ENCODE measurements at regions of chr5 and their contacts with region 1.

Region 1: DNA sequence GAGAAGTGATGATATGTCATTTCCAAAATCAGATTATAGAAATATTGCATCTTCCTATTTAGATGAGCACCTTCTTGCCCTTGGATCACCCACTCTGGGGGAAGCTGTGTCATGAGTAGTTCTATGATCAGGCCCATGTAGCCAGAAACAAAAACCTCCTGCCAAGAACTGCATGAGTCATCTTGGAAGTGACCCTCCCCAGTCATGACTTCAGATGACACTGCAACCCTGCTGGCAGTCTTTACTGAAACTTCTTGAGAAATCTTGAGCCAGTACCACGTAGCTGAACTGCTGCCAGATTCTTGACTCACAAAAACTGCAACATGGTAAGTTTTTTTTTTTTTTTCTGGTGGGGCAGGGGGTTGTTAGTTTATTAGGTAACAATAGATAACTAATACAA is 439.6 kb upstream of the PTGER4 start:
- DNase-seq: peak; percentile 77
- H3K4me3 Mint-ChIP-seq: no peak overlapping the region
- H3K27ac Mint-ChIP-seq: no peak overlapping the region
- H3K4me1 Mint-ChIP-seq: peaks cover 15% of the 10 kb centered on the region
- H3K27me3 Mint-ChIP-seq: no peaks in the 10 kb centered on the region

Region 2: GRCh38 chr5:40021007-40021406 is 219.1 kb before region 1 on chr5:
- CTCF ChIA-PET with region 1: no interaction called
- intact Hi-C with region 1: loop called (anchors 10 kb)
- DNase-seq: no peak
- H3K4me3 Mint-ChIP-seq: no peak overlapping the region
- H3K27ac Mint-ChIP-seq: no peak overlapping the region
- H3K4me1 Mint-ChIP-seq: no peaks in the 10 kb centered on the region
- H3K27me3 Mint-ChIP-seq: peaks cover 10% of the 10 kb centered on the region

Region 3: DNA sequence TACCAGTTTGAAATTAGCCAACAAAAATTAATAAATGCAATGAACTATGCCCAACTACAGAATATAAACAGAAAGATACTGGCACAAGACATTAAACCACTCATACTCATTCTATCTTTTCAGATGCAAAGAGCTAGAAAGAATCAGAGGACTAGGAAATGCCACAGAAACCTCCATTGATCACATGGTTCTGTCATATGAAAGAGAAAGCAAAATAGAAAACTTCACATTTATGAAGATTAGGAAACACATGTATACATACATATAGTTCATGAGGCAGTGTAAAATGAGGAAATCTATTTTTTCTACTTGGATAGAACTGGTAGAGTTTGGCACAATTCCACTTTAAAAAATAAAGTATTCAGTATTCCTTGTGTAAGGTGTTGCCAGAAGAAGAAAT is 164.5 kb after region 1 on chr5:
- CTCF ChIA-PET with region 1: no interaction called
- intact Hi-C with region 1: no loop called
- DNase-seq: no peak
- H3K4me3 Mint-ChIP-seq: peak overlapping the region; percentile 33
- H3K27ac Mint-ChIP-seq: peak overlapping the region; percentile 99
- H3K4me1 Mint-ChIP-seq: peaks cover 89% of the 10 kb centered on the region
- H3K27me3 Mint-ChIP-seq: no peaks in the 10 kb centered on the region

Region 4: DNA sequence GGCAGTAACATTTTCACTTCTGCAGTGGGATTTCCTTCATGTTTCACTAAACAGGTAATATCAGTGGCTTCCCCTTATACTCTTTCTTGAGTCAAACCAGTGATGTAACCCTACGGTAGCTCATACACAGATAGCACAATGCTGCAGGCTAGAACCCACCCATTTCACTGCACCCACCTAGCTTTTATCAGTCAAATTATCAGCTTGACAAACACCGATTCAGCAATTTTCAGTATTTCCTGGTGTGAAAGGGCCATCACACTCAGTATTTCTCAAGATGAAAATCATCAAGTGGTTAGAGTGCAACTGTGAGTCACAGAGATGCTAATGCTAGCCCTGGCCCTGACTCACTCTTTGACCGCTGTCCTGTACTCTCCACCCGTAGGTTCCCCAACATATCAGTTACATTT is 197.3 kb after region 1 on chr5:
- CTCF ChIA-PET with region 1: no interaction called
- intact Hi-C with region 1: no loop called
- DNase-seq: peak; percentile 19
- H3K4me3 Mint-ChIP-seq: no peak overlapping the region
- H3K27ac Mint-ChIP-seq: peak overlapping the region; percentile 94
- H3K4me1 Mint-ChIP-seq: peaks cover 81% of the 10 kb centered on the region
- H3K27me3 Mint-ChIP-seq: no peaks in the 10 kb centered on the region

Measured in activated naive CD4-positive, alpha-beta T cell treated with anti-CD3 and anti-CD28 coated beads for 36 hours (primary cell).